ENCODE measurements at regions of chr16 and their contacts with region 1.

Region 1: DNA sequence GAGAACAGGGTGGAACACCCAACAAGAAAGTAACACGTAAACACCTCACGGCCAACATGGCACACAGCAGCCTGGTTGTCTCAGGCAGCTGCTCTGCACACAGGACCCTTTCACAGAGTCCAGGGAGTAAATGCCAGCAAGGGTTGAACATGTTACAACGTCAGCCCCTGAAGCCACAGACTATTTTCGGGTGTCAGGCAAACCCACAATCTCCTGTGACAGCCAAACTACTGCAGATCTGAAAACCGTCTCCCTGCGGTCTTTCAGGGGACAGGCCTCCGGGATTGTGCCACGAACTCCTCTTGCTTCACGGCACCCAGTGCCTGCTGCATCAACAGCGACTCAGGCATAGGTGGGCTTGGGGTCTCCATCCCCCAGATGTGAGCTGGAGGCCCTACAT is 127.7 kb downstream of the XYLT1 start:
- DNase-seq: peak; percentile 89
- ATAC-seq: peak; percentile 59
- H3K4me3 Mint-ChIP-seq: peak overlapping the region; percentile 55
- H3K27ac Mint-ChIP-seq: peak overlapping the region; percentile 93
- H3K4me1 Mint-ChIP-seq: peaks cover 83% of the 10 kb centered on the region
- H3K27me3 Mint-ChIP-seq: no peaks in the 10 kb centered on the region

Region 2: GRCh38 chr16:17359788-17360390 is 16.9 kb after region 1 on chr16:
- CTCF ChIA-PET with region 1: interaction called, 32 read pairs
- DNase-seq: peak; percentile 81
- ATAC-seq: peak; percentile 73
- H3K4me3 Mint-ChIP-seq: peak overlapping the region; percentile 3
- H3K27ac Mint-ChIP-seq: peak overlapping the region; percentile 83
- H3K4me1 Mint-ChIP-seq: peaks cover 72% of the 10 kb centered on the region
- H3K27me3 Mint-ChIP-seq: no peaks in the 10 kb centered on the region

Region 3: DNA sequence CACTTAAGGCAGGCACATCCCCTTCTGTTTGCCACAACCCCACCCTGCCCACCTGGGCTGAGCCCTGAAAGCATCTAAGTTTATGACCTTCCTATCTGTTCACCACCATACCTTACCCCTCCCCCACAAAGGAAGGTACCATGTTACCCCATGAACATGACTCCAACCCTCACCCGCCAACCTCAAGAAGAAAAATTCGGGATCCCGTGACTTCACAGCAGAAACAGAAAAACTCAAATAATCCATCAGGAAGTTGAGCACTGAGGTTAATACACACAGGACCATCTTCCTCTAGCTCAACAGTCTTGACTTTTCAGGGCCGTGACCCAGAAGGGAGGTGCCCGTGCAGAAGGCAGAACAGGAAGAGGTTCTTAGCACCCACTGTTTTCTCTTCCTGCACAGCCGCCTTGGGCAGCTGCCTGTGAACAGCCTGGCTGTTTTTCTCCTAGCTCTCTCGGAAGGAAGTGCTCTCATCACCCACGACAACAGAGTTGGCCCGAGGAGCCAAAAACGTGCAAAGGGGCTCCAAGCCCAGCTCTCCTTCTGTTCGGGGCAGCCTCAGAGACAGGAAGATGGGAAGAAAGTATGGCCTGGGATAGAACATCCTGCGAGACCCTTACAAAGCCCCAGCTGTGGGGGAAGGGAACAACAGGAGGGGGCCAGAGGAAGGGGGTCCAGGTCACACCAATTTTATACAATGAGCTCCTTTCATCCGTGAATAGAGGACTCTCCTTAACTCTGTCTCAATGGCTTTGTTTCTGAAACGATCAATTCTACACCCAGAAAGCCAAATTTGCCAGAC is 26.6 kb after region 1 on chr16:
- CTCF ChIA-PET with region 1: interaction called, 52 read pairs
- DNase-seq: peak; percentile 89
- ATAC-seq: peak; percentile 88
- H3K4me3 Mint-ChIP-seq: peak overlapping the region; percentile 85
- H3K27ac Mint-ChIP-seq: peak overlapping the region; percentile 100
- H3K4me1 Mint-ChIP-seq: peaks cover 82% of the 10 kb centered on the region
- H3K27me3 Mint-ChIP-seq: no peaks in the 10 kb centered on the region